Heart left ventricle (tissue), 16 donors: ENCODE measurements at regions of chr1 and their contacts with region 1.

Region 1: GRCh38 chr1:4825800-4826450 is 171.5 kb downstream of the AJAP1 start:
- DNase-seq: no peak
- ATAC-seq: peak in 1 of 4 donors; percentile 38
- H3K4me3 ChIP-seq: no peak overlapping the region
- H3K27ac ChIP-seq: no peak overlapping the region
- H3K4me1 ChIP-seq: no peaks in the 10 kb centered on the region
- H3K27me3 ChIP-seq: peaks cover 0 to 9% (median 0%) of the 10 kb centered on the region in 9 donors
- CTCF ChIP-seq: peak in 7 of 12 donors; percentile 17 to 43 (median 35)
- POLR2A ChIP-seq: no peak

Region 2: GRCh38 chr1:4668864-4669700 is 156.8 kb before region 1 on chr1:
- intact Hi-C with region 1: loop called in 1 of 10 experiments (anchors 10 kb)
- DNase-seq: no peak
- ATAC-seq: no peak
- H3K4me3 ChIP-seq: no peak overlapping the region
- H3K27ac ChIP-seq: no peak overlapping the region
- H3K4me1 ChIP-seq: no peaks in the 10 kb centered on the region
- H3K27me3 ChIP-seq: peaks cover 0 to 32% (median 5%) of the 10 kb centered on the region in 9 donors
- CTCF ChIP-seq: no peak
- POLR2A ChIP-seq: no peak